ENCODE measurements at regions of chr12 and their contacts with region 1.

Region 1: GRCh38 chr12:106841510-106842302 is 67.2 kb downstream of the RIC8B start:
- DNase-seq: no peak
- H3K4me3 ChIP-seq: no peak overlapping the region
- H3K27ac ChIP-seq: no peak overlapping the region
- H3K4me1 ChIP-seq: no peaks in the 10 kb centered on the region
- H3K27me3 ChIP-seq: no peaks in the 10 kb centered on the region
- CTCF ChIP-seq: peak in 2 of 3 donors; percentile 54 to 57
- POLR2A ChIP-seq: no peak

Region 2: DNA sequence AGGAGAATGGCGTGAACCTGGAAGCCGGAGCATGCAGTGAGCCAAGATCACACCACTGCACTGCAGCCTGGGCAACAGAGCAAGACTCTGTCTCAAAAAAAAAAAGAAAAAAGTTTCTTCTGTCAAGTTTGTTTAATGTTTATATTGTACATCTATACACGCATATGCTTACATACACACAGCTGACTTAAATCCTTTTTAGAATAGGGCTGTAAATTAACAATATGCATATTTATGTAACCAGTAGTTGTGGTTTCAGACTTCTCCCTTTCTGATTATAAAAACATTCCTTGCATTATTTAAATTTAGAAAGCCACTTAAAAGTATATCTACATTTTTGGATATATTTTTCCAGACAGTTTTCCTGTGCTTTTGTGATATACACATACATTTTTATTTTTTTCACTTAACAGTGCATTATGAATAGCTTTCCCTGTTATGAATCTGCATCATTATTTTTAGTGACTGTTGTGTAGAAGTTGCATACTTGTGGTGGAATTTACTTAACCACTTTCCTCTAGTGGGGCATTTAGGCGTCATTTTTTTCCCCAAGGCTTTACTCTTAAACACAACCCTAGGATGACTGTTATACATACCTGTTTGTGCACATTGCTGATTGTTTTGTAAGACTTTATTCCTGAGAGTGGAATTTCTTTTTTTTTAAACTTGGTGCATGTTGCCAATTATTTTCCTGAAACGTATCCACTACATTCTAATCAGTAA is 454.7 kb before region 1 on chr12:
- intact Hi-C with region 1: loop called (anchors 10 kb)
- DNase-seq: no peak
- H3K4me3 ChIP-seq: no peak overlapping the region
- H3K27ac ChIP-seq: no peak overlapping the region
- H3K4me1 ChIP-seq: no peaks in the 10 kb centered on the region
- H3K27me3 ChIP-seq: no peaks in the 10 kb centered on the region
- CTCF ChIP-seq: no peak
- POLR2A ChIP-seq: no peak

Region 3: GRCh38 chr12:108228746-108229145 is 1387.0 kb after region 1 on chr12:
- intact Hi-C with region 1: no loop called
- DNase-seq: no peak
- H3K4me3 ChIP-seq: no peak overlapping the region
- H3K27ac ChIP-seq: no peak overlapping the region
- H3K4me1 ChIP-seq: no peaks in the 10 kb centered on the region
- H3K27me3 ChIP-seq: no peaks in the 10 kb centered on the region
- CTCF ChIP-seq: no peak
- POLR2A ChIP-seq: no peak

Measured in breast epithelium (tissue), 4 donors.